Panc1 (cell line): ENCODE measurements at regions of chr13 and their contacts with region 1.

Region 1: GRCh38 chr13:110559429-110559943 is 2.0 kb downstream of the RAB20 start:
- DNase-seq: no peak
- ATAC-seq: peak; percentile 75
- H3K4me3 ChIP-seq: peak overlapping the region; percentile 66 to 67
- H3K27ac ChIP-seq: peak overlapping the region; percentile 77
- H3K4me1 ChIP-seq: peaks cover 5% of the 10 kb centered on the region
- H3K27me3 ChIP-seq: no peaks in the 10 kb centered on the region
- CTCF ChIP-seq: no peak

Region 2: GRCh38 chr13:110330491-110331001 is 228.9 kb before region 1 on chr13:
- CTCF ChIA-PET with region 1: no interaction called
- POLR2A ChIA-PET with region 1: no interaction called
- in situ Hi-C with region 1: no loop called
- intact Hi-C with region 1: no loop called
- DNase-seq: no peak
- ATAC-seq: no peak
- H3K4me3 ChIP-seq: no peak overlapping the region
- H3K27ac ChIP-seq: no peak overlapping the region
- H3K4me1 ChIP-seq: no peaks in the 10 kb centered on the region
- H3K27me3 ChIP-seq: no peaks in the 10 kb centered on the region
- CTCF ChIP-seq: no peak

Region 3: GRCh38 chr13:110455941-110456340 is 103.5 kb before region 1 on chr13:
- CTCF ChIA-PET with region 1: no interaction called
- POLR2A ChIA-PET with region 1: no interaction called
- in situ Hi-C with region 1: no loop called
- intact Hi-C with region 1: loop called (anchors 5 kb)
- DNase-seq: peak; percentile 52
- ATAC-seq: peak; percentile 97
- H3K4me3 ChIP-seq: peak overlapping the region; percentile 8 to 34; a peak in 2 of 4 replicates
- H3K27ac ChIP-seq: no peak overlapping the region
- H3K4me1 ChIP-seq: no peaks in the 10 kb centered on the region
- H3K27me3 ChIP-seq: no peaks in the 10 kb centered on the region
- CTCF ChIP-seq: peak; percentile 79

Region 4: GRCh38 chr13:110822669-110822945 is 263.1 kb after region 1 on chr13:
- CTCF ChIA-PET with region 1: no interaction called
- POLR2A ChIA-PET with region 1: interaction called, 16 read pairs
- in situ Hi-C with region 1: no loop called
- intact Hi-C with region 1: no loop called
- DNase-seq: no peak
- ATAC-seq: no peak
- H3K4me3 ChIP-seq: no peak overlapping the region
- H3K27ac ChIP-seq: no peak overlapping the region
- H3K4me1 ChIP-seq: no peaks in the 10 kb centered on the region
- H3K27me3 ChIP-seq: no peaks in the 10 kb centered on the region
- CTCF ChIP-seq: no peak